HEK293T (cell line): ENCODE measurements at regions of chr1 and their contacts with region 1.

Region 1: GRCh38 chr1:150629115-150629928 is at the start of gene ENSA:
- DNase-seq: peak; percentile 97

Region 2: GRCh38 chr1:150561974-150562445 is 67.3 kb before region 1 on chr1:
- CTCF ChIA-PET with region 1: interaction called, 5 read pairs
- POLR2A ChIA-PET with region 1: interaction called, 32 read pairs
- DNase-seq: peak; percentile 89

Region 3: GRCh38 chr1:150603711-150604110 is 25.6 kb before region 1 on chr1:
- CTCF ChIA-PET with region 1: no interaction called
- POLR2A ChIA-PET with region 1: interaction called, 11 read pairs
- DNase-seq: no peak

Region 4: GRCh38 chr1:150642296-150642695 is 13.0 kb after region 1 on chr1:
- CTCF ChIA-PET with region 1: no interaction called
- POLR2A ChIA-PET with region 1: interaction called, 12 read pairs
- DNase-seq: no peak

Region 5: GRCh38 chr1:150650199-150650598 is 20.9 kb after region 1 on chr1:
- CTCF ChIA-PET with region 1: no interaction called
- POLR2A ChIA-PET with region 1: interaction called, 10 read pairs
- DNase-seq: no peak

Region 6: GRCh38 chr1:150678988-150679387 is 49.7 kb after region 1 on chr1:
- CTCF ChIA-PET with region 1: no interaction called
- POLR2A ChIA-PET with region 1: no interaction called
- DNase-seq: no peak

Region 7: DNA sequence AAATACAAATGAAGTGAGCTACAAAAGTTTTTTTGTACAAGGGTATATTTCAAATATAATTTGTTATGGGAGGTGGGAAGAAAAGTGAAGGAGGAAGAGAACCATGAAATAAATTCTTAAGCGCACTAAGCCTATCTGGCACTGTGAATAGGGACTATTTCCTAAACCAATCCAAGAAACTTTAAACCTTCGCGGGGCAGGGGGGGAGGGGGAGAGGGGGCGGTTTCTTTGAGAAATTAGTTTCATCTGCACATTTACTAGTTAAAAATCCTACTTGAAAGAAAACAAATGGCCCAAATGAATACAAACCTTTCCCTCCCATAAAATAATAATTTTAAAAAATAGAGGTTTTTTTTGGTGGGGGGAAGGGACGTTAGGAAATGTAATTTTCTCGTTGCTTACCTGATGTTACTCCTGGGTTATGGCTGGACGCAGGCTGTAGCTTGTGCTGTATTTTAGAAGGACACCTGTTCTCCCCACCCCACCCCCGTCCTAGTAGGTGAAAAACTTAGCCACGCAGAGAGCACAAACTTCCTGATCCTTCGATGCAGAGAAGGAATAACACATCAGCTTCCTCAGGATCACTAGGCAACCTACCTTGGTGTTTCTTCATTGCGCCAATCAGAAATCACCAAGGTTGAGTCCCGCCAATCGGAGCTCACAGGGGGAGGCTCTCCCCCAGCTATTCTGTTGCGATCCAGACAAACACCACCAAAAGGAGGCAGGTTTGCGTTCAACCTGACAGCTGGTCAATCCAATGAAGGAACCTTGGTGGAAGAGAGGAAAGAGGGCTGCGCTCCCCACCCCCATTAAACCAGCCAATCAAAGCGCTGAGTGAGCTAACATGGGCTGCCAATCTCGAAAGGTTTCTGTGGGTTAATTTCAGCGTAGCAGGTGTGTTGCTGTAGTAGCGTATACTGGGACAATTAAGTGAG is 67.5 kb after region 1 on chr1 and contains the start of gene GOLPH3L:
- CTCF ChIA-PET with region 1: no interaction called
- POLR2A ChIA-PET with region 1: interaction called, 20 read pairs
- DNase-seq: peak; percentile 95

Region 8: GRCh38 chr1:150813058-150813707 is 183.9 kb after region 1 on chr1:
- CTCF ChIA-PET with region 1: no interaction called
- POLR2A ChIA-PET with region 1: interaction called, 13 read pairs
- DNase-seq: peak; percentile 74